ENCODE measurements at regions of chr1 and their contacts with region 1.

Region 1: DNA sequence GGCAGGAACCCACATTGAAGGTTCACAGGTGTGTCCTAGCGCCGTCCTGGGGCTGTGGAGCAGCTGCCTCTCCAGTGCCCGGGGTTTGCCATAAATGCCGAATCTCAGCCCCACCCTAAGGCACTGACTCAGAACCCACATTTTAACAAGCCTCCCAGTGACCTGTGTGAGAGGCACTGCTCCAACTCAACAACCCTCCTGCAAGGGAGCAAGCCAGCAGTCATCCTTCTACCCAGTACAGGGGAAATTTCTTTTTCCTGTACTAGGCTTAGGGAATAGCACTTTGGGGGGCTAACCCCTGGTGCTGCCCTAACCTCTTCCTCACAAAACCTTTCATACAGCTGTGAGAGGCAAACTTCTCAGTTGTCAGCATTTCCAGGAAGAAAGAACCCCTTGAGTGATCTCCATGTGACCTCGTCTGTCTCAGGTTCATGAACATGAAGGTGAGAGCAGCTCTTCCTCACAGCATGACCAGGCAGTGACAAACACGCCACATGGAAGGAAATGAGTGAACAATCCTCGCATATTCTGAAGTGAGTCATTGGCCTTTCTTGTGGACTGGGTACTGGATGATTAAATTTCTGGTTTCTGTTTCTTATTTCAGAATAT is 11.4 kb upstream of the BCAR3 start:
- DNase-seq: peak; percentile 76
- ATAC-seq: peak; percentile 77
- H3K4me3 ChIP-seq: peak overlapping the region in 1 of 5 experiments; percentile 34
- H3K4me3 Mint-ChIP-seq: peak overlapping the region; percentile 69
- H3K27ac ChIP-seq: peak overlapping the region; percentile 45 to 53
- H3K27ac Mint-ChIP-seq: peak overlapping the region; percentile 83
- H3K4me1 ChIP-seq: peaks cover 59 to 75% of the 10 kb centered on the region in 2 donors
- H3K4me1 Mint-ChIP-seq: peaks cover 18% of the 10 kb centered on the region
- H3K27me3 ChIP-seq: no peaks in the 10 kb centered on the region
- H3K27me3 Mint-ChIP-seq: no peaks in the 10 kb centered on the region
- CTCF ChIP-seq: no peak

Region 2: GRCh38 chr1:93502561-93502960 is 190.5 kb before region 1 on chr1:
- CTCF ChIA-PET with region 1: no interaction called
- POLR2A ChIA-PET with region 1: no interaction called
- intact Hi-C with region 1: no loop called
- DNase-seq: no peak
- ATAC-seq: no peak
- H3K4me3 ChIP-seq: no peak overlapping the region
- H3K4me3 Mint-ChIP-seq: no peak overlapping the region
- H3K27ac ChIP-seq: no peak overlapping the region
- H3K27ac Mint-ChIP-seq: no peak overlapping the region
- H3K4me1 ChIP-seq: no peaks in the 10 kb centered on the region
- H3K4me1 Mint-ChIP-seq: no peaks in the 10 kb centered on the region
- H3K27me3 ChIP-seq: no peaks in the 10 kb centered on the region
- H3K27me3 Mint-ChIP-seq: no peaks in the 10 kb centered on the region
- CTCF ChIP-seq: no peak

Region 3: GRCh38 chr1:93708734-93709481 is 15.8 kb after region 1 on chr1:
- CTCF ChIA-PET with region 1: interaction called, 4 read pairs
- POLR2A ChIA-PET with region 1: interaction called, 9 read pairs
- intact Hi-C with region 1: loop called (anchors 2 kb)
- DNase-seq: no peak
- ATAC-seq: no peak
- H3K4me3 ChIP-seq: no peak overlapping the region
- H3K4me3 Mint-ChIP-seq: peak overlapping the region; percentile 40
- H3K27ac ChIP-seq: peak overlapping the region; percentile 41 to 58
- H3K27ac Mint-ChIP-seq: peak overlapping the region; percentile 42
- H3K4me1 ChIP-seq: peaks cover 49 to 63% of the 10 kb centered on the region in 2 donors
- H3K4me1 Mint-ChIP-seq: peaks cover 54% of the 10 kb centered on the region
- H3K27me3 ChIP-seq: no peaks in the 10 kb centered on the region
- H3K27me3 Mint-ChIP-seq: no peaks in the 10 kb centered on the region
- CTCF ChIP-seq: no peak

Region 4: GRCh38 chr1:93729502-93729901 is 36.4 kb after region 1 on chr1:
- CTCF ChIA-PET with region 1: interaction called, 3 read pairs
- POLR2A ChIA-PET with region 1: no interaction called
- intact Hi-C with region 1: loop called (anchors 5 kb)
- DNase-seq: no peak
- ATAC-seq: no peak
- H3K4me3 ChIP-seq: no peak overlapping the region
- H3K4me3 Mint-ChIP-seq: no peak overlapping the region
- H3K27ac ChIP-seq: no peak overlapping the region
- H3K27ac Mint-ChIP-seq: peak overlapping the region; percentile 37
- H3K4me1 ChIP-seq: peaks cover 0 to 5% of the 10 kb centered on the region in 2 donors
- H3K4me1 Mint-ChIP-seq: peaks cover 24% of the 10 kb centered on the region
- H3K27me3 ChIP-seq: no peaks in the 10 kb centered on the region
- H3K27me3 Mint-ChIP-seq: no peaks in the 10 kb centered on the region
- CTCF ChIP-seq: no peak